ENCODE measurements at regions of chr1 and their contacts with region 1.

Region 1: GRCh38 chr1:19762175-19762779 is 37.4 kb downstream of the TMCO4 start:
- DNase-seq: peak; percentile 50
- H3K4me3 ChIP-seq: no peak overlapping the region
- H3K27ac ChIP-seq: no peak overlapping the region
- H3K4me1 ChIP-seq: peaks cover 20% of the 10 kb centered on the region
- H3K27me3 ChIP-seq: no peaks in the 10 kb centered on the region
- CTCF ChIP-seq: peak; percentile 83 to 86
- POLR2A ChIP-seq: no peak

Region 2: GRCh38 chr1:19268445-19268844 is 493.8 kb before region 1 on chr1:
- CTCF ChIA-PET with region 1: no interaction called
- POLR2A ChIA-PET with region 1: no interaction called
- dilution Hi-C with region 1: no loop called
- intact Hi-C with region 1: no loop called
- DNase-seq: no peak
- H3K4me3 ChIP-seq: no peak overlapping the region
- H3K27ac ChIP-seq: no peak overlapping the region
- H3K4me1 ChIP-seq: no peaks in the 10 kb centered on the region
- H3K27me3 ChIP-seq: no peaks in the 10 kb centered on the region
- CTCF ChIP-seq: no peak
- POLR2A ChIP-seq: no peak

Region 3: DNA sequence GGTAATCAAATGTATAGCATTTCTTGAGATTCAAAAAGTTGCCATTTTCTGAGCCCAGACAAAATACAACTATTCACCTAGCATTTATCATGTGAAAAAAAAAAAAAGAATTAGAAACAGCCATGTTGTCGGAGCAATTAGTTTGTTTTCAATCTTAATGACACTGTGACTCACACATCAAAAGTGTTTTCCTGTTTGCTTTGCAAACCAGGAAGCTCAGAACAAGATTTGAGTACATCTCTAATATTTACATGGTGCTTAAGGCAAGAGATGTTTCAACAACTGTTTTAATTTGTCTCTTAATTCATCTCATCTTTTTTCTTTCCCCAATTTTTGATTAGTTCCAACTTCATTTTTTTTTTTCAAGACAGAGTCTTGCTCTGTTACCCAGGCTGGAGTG is 214.5 kb before region 1 on chr1:
- CTCF ChIA-PET with region 1: no interaction called
- POLR2A ChIA-PET with region 1: no interaction called
- dilution Hi-C with region 1: no loop called
- intact Hi-C with region 1: no loop called
- DNase-seq: no peak
- H3K4me3 ChIP-seq: no peak overlapping the region
- H3K27ac ChIP-seq: no peak overlapping the region
- H3K4me1 ChIP-seq: no peaks in the 10 kb centered on the region
- H3K27me3 ChIP-seq: peaks cover 0 to 2% of the 10 kb centered on the region in 2 experiments
- CTCF ChIP-seq: no peak
- POLR2A ChIP-seq: no peak

Region 4: DNA sequence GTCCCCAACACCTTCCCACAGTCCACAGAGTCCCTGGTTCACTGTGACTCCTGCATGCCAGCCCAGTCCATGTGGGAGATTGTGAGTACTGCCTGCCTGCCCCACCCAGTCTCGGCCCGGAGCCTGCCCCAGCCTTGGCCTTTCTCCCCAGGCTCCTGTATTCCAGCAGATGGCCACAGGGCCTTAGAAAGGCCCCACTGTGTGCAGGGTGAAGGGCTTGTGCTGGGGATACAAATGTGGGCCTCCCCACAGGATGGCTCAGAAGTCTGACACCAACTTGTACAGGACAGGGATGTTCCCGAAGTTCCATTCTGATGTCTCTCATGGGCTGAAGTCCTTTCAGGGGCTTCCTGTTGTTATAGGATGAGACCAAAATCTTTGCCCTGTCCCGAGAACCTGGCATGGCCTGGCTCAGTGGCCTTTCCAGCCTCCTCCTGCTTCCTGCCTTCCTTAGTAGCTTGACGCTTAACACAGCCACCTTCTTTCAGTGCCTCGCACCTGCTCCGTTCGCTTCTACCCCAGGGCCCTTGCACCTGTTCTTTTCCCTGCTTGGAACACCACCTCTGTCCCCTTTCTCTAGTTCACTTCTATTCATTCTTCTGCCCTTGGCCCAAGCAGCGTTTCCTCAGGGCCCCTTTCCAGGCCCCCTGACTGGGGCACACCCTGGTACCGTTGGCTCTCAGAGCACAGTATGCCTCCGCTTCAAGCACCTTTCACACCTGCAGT is 106.8 kb before region 1 on chr1:
- CTCF ChIA-PET with region 1: no interaction called
- POLR2A ChIA-PET with region 1: no interaction called
- dilution Hi-C with region 1: no loop called
- intact Hi-C with region 1: no loop called
- DNase-seq: no peak
- H3K4me3 ChIP-seq: no peak overlapping the region
- H3K27ac ChIP-seq: no peak overlapping the region
- H3K4me1 ChIP-seq: peaks cover 17% of the 10 kb centered on the region
- H3K27me3 ChIP-seq: no peaks in the 10 kb centered on the region
- CTCF ChIP-seq: no peak
- POLR2A ChIP-seq: no peak

Region 5: DNA sequence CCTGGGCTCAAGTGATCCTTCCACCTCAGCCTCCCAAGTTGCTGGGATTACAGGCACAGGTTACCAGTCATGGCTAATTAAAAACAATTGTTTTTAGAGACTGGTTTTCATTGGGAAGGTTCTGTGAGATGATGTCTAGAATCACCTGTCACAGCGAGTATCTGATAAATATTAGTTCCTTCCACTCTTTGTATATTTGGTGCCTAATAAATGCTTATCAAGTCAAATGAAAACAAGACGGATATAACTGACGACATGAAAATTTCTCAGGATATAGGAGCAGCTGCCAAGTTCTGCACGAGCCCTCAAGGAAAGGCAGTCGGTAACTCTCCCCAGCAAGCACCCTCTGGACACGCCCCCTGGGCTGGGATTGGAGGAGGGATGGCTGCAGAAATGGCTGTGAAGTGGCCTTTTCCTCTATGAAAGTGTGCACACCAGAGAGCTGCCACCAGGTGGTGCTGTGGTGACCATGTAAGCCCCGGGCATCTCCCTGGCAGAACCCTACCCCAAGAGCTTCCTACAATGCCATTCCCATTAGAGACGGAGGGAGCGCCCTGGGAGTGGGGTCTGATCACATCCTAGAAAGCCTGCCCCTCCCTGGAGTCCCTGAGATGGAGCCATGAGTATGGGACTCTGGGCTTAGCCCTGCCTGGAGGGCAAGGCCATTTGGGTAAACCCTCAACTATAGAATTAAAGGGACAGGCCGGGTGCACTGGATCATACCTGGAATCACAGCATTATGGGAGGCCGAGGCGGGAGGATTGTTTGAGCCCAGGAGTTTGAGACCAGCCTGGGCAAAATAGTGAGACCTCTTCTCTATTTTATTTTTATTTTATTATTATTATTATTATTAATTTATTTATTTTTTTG is 46.7 kb before region 1 on chr1:
- CTCF ChIA-PET with region 1: interaction called, 10 read pairs
- POLR2A ChIA-PET with region 1: no interaction called
- dilution Hi-C with region 1: no loop called
- intact Hi-C with region 1: loop called (anchors 1 kb)
- DNase-seq: peak; percentile 97
- H3K4me3 ChIP-seq: no peak overlapping the region
- H3K27ac ChIP-seq: no peak overlapping the region
- H3K4me1 ChIP-seq: no peaks in the 10 kb centered on the region
- H3K27me3 ChIP-seq: no peaks in the 10 kb centered on the region
- CTCF ChIP-seq: peak; percentile 96 to 98
- POLR2A ChIP-seq: no peak

Region 6: GRCh38 chr1:19785295-19786059 is 23.2 kb after region 1 on chr1:
- CTCF ChIA-PET with region 1: interaction called, 10 read pairs
- POLR2A ChIA-PET with region 1: no interaction called
- dilution Hi-C with region 1: no loop called
- intact Hi-C with region 1: no loop called
- DNase-seq: no peak
- H3K4me3 ChIP-seq: no peak overlapping the region
- H3K27ac ChIP-seq: no peak overlapping the region
- H3K4me1 ChIP-seq: no peaks in the 10 kb centered on the region
- H3K27me3 ChIP-seq: no peaks in the 10 kb centered on the region
- CTCF ChIP-seq: no peak
- POLR2A ChIP-seq: no peak

Region 7: GRCh38 chr1:19811206-19811851 is 49.1 kb after region 1 on chr1:
- CTCF ChIA-PET with region 1: interaction called, 21 read pairs
- POLR2A ChIA-PET with region 1: no interaction called
- dilution Hi-C with region 1: no loop called
- intact Hi-C with region 1: loop called (anchors 1 kb)
- DNase-seq: peak; percentile 38
- H3K4me3 ChIP-seq: no peak overlapping the region
- H3K27ac ChIP-seq: no peak overlapping the region
- H3K4me1 ChIP-seq: no peaks in the 10 kb centered on the region
- H3K27me3 ChIP-seq: no peaks in the 10 kb centered on the region
- CTCF ChIP-seq: peak; percentile 65 to 79
- POLR2A ChIP-seq: no peak

Region 8: GRCh38 chr1:20151906-20152598 is 389.8 kb after region 1 on chr1:
- CTCF ChIA-PET with region 1: interaction called, 6 read pairs
- POLR2A ChIA-PET with region 1: no interaction called
- dilution Hi-C with region 1: no loop called
- intact Hi-C with region 1: loop called (anchors 1 kb)
- DNase-seq: peak; percentile 42
- H3K4me3 ChIP-seq: peak overlapping the region in 1 of 3 experiments; percentile 7
- H3K27ac ChIP-seq: no peak overlapping the region
- H3K4me1 ChIP-seq: peaks cover 4% of the 10 kb centered on the region
- H3K27me3 ChIP-seq: no peaks in the 10 kb centered on the region
- CTCF ChIP-seq: peak; percentile 87 to 91
- POLR2A ChIP-seq: no peak